AG04449 (cell line): ENCODE measurements at regions of chr17 and their contacts with region 1.

Region 1: GRCh38 chr17:32936894-32937500 is 9.0 kb downstream of the TMEM98 start:
- DNase-seq: no peak
- H3K4me3 ChIP-seq: no peak overlapping the region
- CTCF ChIP-seq: peak; percentile 78

Region 2: GRCh38 chr17:32854207-32854606 is 82.8 kb before region 1 on chr17:
- CTCF ChIA-PET with region 1: no interaction called
- POLR2A ChIA-PET with region 1: no interaction called
- DNase-seq: no peak
- H3K4me3 ChIP-seq: no peak overlapping the region
- CTCF ChIP-seq: no peak

Region 3: GRCh38 chr17:32915245-32915644 is 21.8 kb before region 1 on chr17:
- CTCF ChIA-PET with region 1: interaction called, 10 read pairs
- POLR2A ChIA-PET with region 1: no interaction called
- DNase-seq: no peak
- H3K4me3 ChIP-seq: no peak overlapping the region
- CTCF ChIP-seq: no peak

Region 4: GRCh38 chr17:32954477-32954876 is 17.5 kb after region 1 on chr17:
- CTCF ChIA-PET with region 1: interaction called, 18 read pairs
- POLR2A ChIA-PET with region 1: no interaction called
- DNase-seq: no peak
- H3K4me3 ChIP-seq: no peak overlapping the region
- CTCF ChIP-seq: no peak